ENCODE measurements at regions of chr17 and their contacts with region 1.

Region 1: DNA sequence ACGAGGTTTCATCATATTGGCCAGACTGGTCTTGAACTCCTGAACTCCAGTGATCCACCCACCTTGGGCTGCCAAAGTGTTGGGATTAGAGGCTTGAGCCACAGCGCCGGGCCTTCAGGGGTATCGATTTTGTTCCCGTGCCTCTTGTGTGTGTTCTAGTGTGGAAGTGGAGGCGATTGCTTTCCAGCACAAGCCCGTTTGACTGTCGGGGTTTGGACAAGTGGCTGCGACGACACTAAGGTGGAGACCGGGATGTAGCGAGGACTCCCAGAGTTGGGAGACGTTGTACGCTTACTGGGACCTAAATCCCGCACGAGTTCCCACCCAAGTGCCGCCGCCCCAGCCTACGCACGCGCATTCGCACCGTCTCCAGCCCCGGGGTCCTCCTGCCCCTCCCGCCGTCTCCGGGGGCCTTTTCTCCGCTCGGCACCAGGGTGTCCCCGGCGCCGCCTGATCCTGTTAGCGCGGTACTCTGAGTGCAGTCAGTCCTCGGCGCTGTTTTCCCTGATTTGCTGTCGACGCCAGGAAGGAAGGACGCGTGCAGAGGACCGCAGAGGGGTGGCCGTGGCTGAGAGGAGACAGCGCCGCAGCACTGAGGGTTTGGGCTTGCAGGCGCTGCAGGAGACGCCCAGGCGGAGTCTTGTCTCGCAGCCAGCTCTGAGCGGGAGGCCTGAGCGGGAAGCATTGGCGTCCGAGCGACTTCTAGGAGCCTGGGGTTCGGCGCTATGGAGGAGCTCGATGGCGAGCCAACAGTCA is at the start of gene NUP85:
- DNase-seq: peak; percentile 98
- total RNA-seq, gene NUP85: 49.6 to 50.9 TPM

Region 2: DNA sequence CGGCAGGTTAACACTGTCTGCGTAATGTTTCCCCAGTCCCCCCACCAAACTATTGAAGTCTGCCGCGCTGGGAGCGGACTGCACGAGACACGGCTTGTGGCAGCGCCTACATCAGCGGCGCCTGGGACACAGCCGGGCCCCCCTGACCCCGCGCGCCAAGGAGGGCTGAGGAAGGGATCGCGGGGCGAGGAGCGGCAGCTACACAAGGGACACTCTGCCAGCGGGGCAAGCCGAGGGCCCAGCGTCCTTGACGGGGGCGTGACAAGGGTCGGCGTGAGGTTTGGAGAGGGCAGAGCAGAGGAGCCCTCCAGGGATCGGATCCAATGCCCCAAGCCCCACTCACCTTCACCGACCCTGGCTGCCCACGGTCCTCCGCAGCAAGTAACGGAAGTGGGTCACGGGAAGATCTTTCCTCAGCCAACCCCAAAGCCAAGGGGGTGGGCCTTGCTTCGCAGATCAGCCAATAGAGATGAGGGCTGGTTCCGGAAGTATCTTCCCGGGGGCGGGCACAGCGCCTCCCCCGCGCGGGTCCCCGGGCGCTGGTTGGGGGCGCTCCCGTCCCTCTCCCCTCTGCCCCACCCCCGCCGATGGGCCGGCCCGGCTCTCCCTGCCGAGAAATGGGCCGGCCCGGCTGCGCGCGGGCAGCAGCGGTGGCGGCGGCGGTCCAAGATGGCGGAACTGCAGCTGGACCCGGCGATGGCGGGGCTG is 158.5 kb before region 1 on chr17 and contains the starts of genes ATP5PD and KCTD2:
- intact Hi-C with region 1: loop called in 1 of 2 experiments (anchors 10 kb)
- DNase-seq: peak; percentile 98
- total RNA-seq, gene ATP5PD: 205 to 235 TPM
- total RNA-seq, gene KCTD2: 23.0 to 25.0 TPM

Region 3: DNA sequence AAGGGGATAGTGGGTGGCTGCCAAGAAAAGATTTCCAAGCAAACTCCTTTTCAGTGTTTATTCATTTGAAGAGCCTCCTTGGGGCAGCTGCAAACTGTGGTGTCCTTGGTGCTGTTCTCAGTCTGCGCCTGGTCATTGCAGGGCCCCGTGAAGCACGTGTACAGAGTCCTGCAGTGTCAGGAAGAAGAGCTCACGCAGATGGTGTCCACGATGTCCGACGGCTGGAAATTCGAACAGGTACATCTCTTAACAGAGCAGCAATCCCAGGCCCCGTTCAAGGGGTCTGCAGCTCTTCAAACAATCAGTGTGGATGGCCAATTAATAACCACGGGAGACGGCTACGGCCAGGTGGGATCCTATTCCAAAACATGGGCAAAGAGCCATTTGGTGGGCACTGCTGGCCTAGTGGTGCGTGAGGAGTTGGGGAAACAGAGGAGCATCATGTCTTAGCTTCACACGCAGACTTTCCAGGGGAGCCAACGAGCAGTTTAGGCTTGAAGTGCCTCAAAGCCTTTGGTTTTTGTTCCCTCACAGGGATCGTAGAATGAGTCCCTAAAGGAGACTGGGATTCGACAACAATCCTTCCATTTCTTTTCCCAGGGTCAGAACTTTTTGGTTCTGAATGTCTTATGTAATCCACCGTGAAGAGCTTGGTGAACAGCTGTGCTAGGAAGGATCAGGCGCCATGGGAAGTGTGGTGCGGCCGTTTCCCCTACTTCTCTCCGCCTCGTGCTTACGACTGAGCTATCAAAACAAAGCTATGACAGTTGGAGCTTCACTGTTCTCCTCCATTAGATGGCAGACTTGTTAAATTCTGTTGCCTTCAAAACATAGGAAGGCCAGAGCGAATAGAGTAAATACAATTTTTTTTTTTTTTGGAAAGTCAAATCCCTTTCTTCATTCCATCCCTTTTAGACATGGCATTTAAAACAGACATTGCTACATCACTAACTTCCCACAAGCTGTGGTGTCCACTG is 145.6 kb before region 1 on chr17:
- intact Hi-C with region 1: loop called in 1 of 2 experiments (anchors 10 kb)
- DNase-seq: peak; percentile 69